ENCODE measurements at regions of chr12 and their contacts with region 1.

Region 1: GRCh38 chr12:53180220-53180930 is at the starts of genes CSAD and ZNF740:
- DNase-seq: peak; percentile 99
- ATAC-seq: peak; percentile 94
- H3K4me3 Mint-ChIP-seq: peak within 1 kb of the TSS; percentile 98
- H3K27ac Mint-ChIP-seq: peak within 1 kb of the TSS; percentile 98
- H3K4me1 Mint-ChIP-seq: peaks cover 60% of the 10 kb centered on the region
- H3K27me3 Mint-ChIP-seq: no peaks in the 10 kb centered on the region
- total RNA-seq, gene CSAD: 20.0 to 23.1 TPM
- total RNA-seq, gene ZNF740: 34.9 to 40.2 TPM

Region 2: GRCh38 chr12:53054112-53054833 is 126.1 kb before region 1 on chr12:
- CTCF ChIA-PET with region 1: interaction called, 4 read pairs
- POLR2A ChIA-PET with region 1: no interaction called
- intact Hi-C with region 1: loop called in 1 of 2 experiments (anchors 1 kb)
- DNase-seq: peak; percentile 96
- ATAC-seq: peak; percentile 94
- H3K4me3 Mint-ChIP-seq: peak overlapping the region; percentile 86
- H3K27ac Mint-ChIP-seq: peak overlapping the region; percentile 84
- H3K4me1 Mint-ChIP-seq: peaks cover 14% of the 10 kb centered on the region
- H3K27me3 Mint-ChIP-seq: no peaks in the 10 kb centered on the region

Region 3: GRCh38 chr12:53200458-53201176 is 20.2 kb after region 1 on chr12:
- CTCF ChIA-PET with region 1: interaction called, 16 read pairs
- POLR2A ChIA-PET with region 1: interaction called, 5 read pairs
- intact Hi-C with region 1: loop called (anchors 1 to 2 kb)
- DNase-seq: peak; percentile 68
- ATAC-seq: peak; percentile 52
- H3K4me3 Mint-ChIP-seq: peak overlapping the region; percentile 44
- H3K27ac Mint-ChIP-seq: peak overlapping the region; percentile 90
- H3K4me1 Mint-ChIP-seq: peaks cover 74% of the 10 kb centered on the region
- H3K27me3 Mint-ChIP-seq: no peaks in the 10 kb centered on the region

Region 4: GRCh38 chr12:53251477-53252348 is 71.3 kb after region 1 on chr12:
- CTCF ChIA-PET with region 1: interaction called, 5 read pairs
- POLR2A ChIA-PET with region 1: no interaction called
- intact Hi-C with region 1: loop called in 1 of 2 experiments (anchors 1 kb)
- DNase-seq: peak; percentile 83
- ATAC-seq: peak; percentile 91
- H3K4me3 Mint-ChIP-seq: peak overlapping the region; percentile 97
- H3K27ac Mint-ChIP-seq: peak overlapping the region; percentile 95
- H3K4me1 Mint-ChIP-seq: peaks cover 36% of the 10 kb centered on the region
- H3K27me3 Mint-ChIP-seq: no peaks in the 10 kb centered on the region

Region 5: DNA sequence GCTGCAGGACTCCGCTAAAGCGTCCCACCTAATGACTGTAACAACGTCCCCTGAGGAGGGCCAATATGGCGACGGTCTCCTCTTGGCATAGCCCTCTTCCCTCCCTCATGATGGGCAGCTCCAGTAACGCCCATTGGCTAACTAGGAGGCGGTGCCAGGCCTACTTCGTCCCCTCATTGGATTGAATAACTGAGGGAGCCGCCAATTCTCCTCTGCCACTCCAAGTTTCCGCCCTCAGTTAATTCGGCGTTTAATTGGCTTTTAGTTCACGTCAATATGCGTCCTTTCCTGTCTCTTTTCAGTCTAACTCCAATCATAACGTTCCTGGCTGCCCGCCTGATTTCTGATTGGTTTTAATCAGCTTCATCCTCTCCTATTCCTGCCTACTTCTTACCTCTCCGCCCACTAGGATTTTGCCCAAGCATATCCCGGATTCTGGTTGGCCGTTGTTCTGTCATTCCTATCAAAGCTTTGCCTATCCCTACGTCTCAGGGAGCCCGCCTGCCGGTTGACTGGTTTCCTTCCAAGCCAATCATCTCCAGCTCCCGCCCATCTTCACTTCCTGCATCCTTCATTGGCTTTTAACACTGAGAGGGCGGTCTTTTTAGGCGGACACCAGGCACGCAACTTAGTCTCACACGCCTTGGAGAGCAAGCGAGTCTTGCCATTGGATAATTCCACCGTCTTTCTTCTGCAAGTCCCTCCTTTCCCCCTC is 199.2 kb after region 1 on chr12:
- CTCF ChIA-PET with region 1: no interaction called
- POLR2A ChIA-PET with region 1: interaction called, 5 read pairs
- intact Hi-C with region 1: loop called in 1 of 2 experiments (anchors 1 kb)
- DNase-seq: peak; percentile 96
- ATAC-seq: peak; percentile 82
- H3K4me3 Mint-ChIP-seq: no peak overlapping the region
- H3K27ac Mint-ChIP-seq: no peak overlapping the region
- H3K4me1 Mint-ChIP-seq: peaks cover 39% of the 10 kb centered on the region
- H3K27me3 Mint-ChIP-seq: no peaks in the 10 kb centered on the region

Region 6: DNA sequence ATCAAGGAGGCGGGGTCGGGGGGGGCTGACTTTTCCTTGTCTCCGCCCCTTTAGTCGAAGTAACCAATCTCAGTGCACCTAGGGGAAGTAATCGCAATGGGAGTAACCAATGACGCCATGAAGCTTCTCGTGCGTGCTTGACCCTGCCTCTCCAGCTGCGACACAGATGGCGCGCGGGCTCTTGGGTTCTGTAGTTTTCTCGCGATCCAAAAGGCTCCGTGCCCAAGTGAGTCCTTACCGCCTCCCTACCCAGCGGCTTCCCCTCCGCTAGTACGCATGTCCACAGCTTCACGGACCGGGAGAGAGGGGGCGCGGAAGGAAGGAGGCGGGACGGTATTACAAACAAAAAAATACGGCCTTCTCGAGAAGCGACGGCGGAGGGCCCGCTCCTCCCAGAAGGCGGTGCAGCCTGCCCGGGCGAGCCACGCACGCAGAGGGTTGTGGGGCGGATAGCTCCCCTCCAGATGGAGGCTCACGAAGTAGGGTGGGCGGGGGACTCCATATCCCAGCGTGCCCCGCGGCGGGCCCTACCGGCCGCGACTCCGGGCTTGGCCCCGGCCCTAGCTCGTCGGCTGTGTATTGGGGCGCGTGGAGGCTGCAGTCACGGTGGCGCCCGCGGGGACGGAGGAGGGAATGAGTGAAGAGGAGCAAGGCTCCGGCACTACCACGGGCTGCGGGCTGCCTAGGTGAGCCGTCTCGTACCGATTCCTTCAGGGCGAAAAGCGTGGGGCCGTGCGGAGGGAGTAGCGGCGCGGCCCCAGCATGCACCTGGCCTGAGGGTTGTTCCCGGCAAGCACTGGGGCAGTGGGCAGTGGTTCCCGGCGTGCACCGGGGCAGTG is 320.6 kb after region 1 on chr12 and contains the start of gene TARBP2:
- CTCF ChIA-PET with region 1: interaction called, 3 read pairs
- POLR2A ChIA-PET with region 1: no interaction called
- intact Hi-C with region 1: loop called in 1 of 2 experiments (anchors 1 kb)
- DNase-seq: peak; percentile 98
- ATAC-seq: peak; percentile 84
- H3K4me3 Mint-ChIP-seq: peak within 1 kb of the TSS; percentile 81
- H3K27ac Mint-ChIP-seq: peak within 1 kb of the TSS; percentile 98
- H3K4me1 Mint-ChIP-seq: peaks cover 31% of the 10 kb centered on the region
- H3K27me3 Mint-ChIP-seq: no peaks in the 10 kb centered on the region
- total RNA-seq, gene TARBP2: 28.3 to 30.2 TPM